Right ventricle myocardium inferior (tissue), 1 donor: ENCODE measurements at regions of chr1 and their contacts with region 1.

Region 1: GRCh38 chr1:9455487-9456234 is 83.6 kb upstream of the SLC25A33 start:
- DNase-seq: peak; percentile 80
- ATAC-seq: peak; percentile 77

Region 2: GRCh38 chr1:9269078-9269501 is 186.6 kb before region 1 on chr1:
- intact Hi-C with region 1: loop called (anchors 5 kb)
- DNase-seq: no peak
- ATAC-seq: no peak

Region 3: GRCh38 chr1:9292361-9293240 is 163.1 kb before region 1 on chr1 and contains the start of gene SPSB1:
- intact Hi-C with region 1: loop called (anchors 2 kb)
- DNase-seq: peak; percentile 82
- ATAC-seq: peak; percentile 75
- total RNA-seq, gene SPSB1: 16.5 TPM

Region 4: GRCh38 chr1:9593492-9594465 is 138.1 kb after region 1 on chr1:
- intact Hi-C with region 1: no loop called
- DNase-seq: peak; percentile 81
- ATAC-seq: peak; percentile 25